Panc1 (cell line): ENCODE measurements at regions of chr19 and their contacts with region 1.

Region 1: DNA sequence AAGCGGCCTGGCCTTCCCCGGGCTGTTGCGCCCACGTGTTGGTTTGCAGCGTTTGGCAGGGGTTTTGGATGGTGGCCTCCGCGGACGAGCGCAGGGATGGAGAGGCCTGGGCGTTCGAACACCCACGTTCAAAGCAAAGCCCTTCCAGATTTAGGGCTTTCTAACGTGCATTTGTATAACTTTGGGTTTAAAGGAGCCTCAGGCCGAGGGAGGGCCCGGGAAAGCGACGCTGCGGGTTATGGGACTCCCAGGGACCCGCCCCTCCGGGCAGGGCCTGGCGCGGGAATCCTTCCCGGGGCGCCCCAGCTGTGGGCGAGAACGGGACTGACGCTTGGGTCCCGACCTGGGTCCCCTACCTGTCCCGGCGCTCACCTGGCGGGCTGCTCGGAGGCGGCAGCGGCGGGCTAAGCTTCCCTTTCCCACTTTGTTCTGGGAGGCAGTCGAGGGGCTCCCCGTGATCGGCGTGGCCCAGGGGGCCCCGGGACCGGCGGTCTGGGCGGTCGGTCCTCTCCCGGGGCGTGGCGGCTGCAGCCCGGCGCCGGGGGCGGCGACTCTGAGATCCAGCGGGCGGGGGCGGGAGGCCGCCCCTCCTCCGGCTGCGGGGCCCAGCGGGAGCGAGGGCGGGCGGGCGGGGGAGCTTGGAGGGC is at the start of gene FBXO17:
- DNase-seq: peak; percentile 81
- ATAC-seq: peak; percentile 89
- H3K4me3 ChIP-seq: peak within 1 kb of the TSS; percentile 50 to 59
- H3K27ac ChIP-seq: peak within 1 kb of the TSS; percentile 97
- H3K4me1 ChIP-seq: peaks cover 48% of the 10 kb centered on the region
- H3K27me3 ChIP-seq: no peaks in the 10 kb centered on the region
- CTCF ChIP-seq: no peak
- total RNA-seq, gene FBXO17: 411 TPM

Region 2: DNA sequence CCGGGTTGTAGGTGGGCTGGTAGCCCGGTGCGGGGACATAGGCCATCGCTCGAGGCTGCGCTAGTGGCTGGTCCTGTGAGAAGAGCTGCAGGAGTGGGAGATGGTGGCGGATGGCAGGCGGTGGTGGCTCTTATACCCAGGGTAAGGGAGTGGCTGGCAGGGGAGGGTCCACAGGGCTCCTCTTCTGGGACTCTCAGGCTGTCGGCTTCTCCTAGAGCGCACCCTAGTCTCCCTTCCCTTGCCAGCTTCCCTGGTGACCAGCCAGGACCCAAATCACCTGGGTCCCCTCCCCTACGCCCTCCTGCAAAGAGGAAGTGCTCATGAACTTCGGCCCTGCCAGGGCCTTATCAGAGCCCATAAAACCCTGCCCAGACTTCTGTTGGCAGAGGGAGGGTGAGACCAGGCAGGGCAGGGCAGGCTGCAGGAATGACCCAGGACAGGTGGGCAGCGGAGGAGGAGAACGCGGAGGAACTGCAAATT is 162.5 kb before region 1 on chr19 and contains the start of gene LGALS4:
- CTCF ChIA-PET with region 1: no interaction called
- POLR2A ChIA-PET with region 1: interaction called, 13 read pairs
- in situ Hi-C with region 1: no loop called
- intact Hi-C with region 1: no loop called
- DNase-seq: no peak
- ATAC-seq: peak; percentile 43
- H3K4me3 ChIP-seq: no peak within 1 kb of the TSS
- H3K27ac ChIP-seq: no peak within 1 kb of the TSS; the same call in 1 of the 2 replicates
- H3K4me1 ChIP-seq: peaks cover 4% of the 10 kb centered on the region; the same call in 1 of the 2 replicates
- H3K27me3 ChIP-seq: no peaks in the 10 kb centered on the region
- CTCF ChIP-seq: no peak
- total RNA-seq, gene LGALS4: 3.9 TPM

Region 3: GRCh38 chr19:38989066-38989605 is 13.8 kb after region 1 on chr19:
- CTCF ChIA-PET with region 1: interaction called, 36 read pairs
- POLR2A ChIA-PET with region 1: interaction called, 5 read pairs
- in situ Hi-C with region 1: no loop called
- intact Hi-C with region 1: no loop called
- DNase-seq: no peak
- ATAC-seq: peak; percentile 80
- H3K4me3 ChIP-seq: no peak overlapping the region
- H3K27ac ChIP-seq: peak overlapping the region; percentile 2
- H3K4me1 ChIP-seq: peaks cover 14% of the 10 kb centered on the region
- H3K27me3 ChIP-seq: no peaks in the 10 kb centered on the region
- CTCF ChIP-seq: no peak

Region 4: DNA sequence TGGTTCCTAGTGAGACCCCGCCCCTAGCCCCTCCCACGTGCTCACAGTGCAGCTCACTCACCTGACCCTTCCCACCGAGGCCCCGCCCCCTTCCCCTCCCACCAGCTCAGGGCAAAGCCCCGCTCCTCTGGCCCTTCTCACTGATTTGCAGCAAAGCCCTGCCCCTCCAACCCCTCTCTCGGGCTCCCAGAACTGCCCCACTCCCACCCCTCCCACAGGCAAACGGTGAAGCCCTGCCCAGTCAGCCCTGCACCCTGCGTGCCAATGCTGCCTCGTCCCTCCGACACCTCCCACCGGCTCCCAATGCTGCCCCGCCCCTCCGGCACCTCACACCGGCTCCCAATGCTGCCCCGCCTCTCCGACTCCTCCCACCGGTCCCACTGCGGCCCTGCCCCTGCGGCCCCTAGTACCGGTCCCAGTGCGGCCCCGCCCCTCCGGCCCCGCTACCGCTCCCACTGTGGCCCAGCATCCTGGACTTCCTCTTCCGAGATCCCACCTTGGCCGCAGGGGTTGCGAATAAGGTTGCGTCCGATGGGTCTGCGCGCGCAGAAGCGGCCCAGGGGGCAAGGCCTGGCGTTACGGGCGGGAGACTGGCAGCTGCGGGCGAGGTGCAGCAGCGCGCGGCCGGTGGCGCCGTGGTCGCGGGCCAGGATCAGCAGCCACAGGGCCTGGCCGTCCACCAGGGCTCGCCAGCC is 56.2 kb after region 1 on chr19:
- CTCF ChIA-PET with region 1: interaction called, 22 read pairs
- POLR2A ChIA-PET with region 1: interaction called, 4 read pairs
- in situ Hi-C with region 1: no loop called
- intact Hi-C with region 1: loop called (anchors 1 kb)
- DNase-seq: peak; percentile 100
- ATAC-seq: peak; percentile 93
- H3K4me3 ChIP-seq: peak overlapping the region; percentile 46 to 72
- H3K27ac ChIP-seq: peak overlapping the region; percentile 91
- H3K4me1 ChIP-seq: peaks cover 24% of the 10 kb centered on the region
- H3K27me3 ChIP-seq: no peaks in the 10 kb centered on the region
- CTCF ChIP-seq: no peak

Region 5: GRCh38 chr19:39038098-39038497 is 62.8 kb after region 1 on chr19:
- CTCF ChIA-PET with region 1: interaction called, 22 read pairs
- POLR2A ChIA-PET with region 1: interaction called, 3 read pairs
- in situ Hi-C with region 1: no loop called
- intact Hi-C with region 1: no loop called
- DNase-seq: no peak
- ATAC-seq: peak; percentile 96
- H3K4me3 ChIP-seq: peak overlapping the region in 1 of 2 experiments; percentile 5; a peak in 2 of 4 replicates
- H3K27ac ChIP-seq: peak overlapping the region; percentile 3; the same call in 1 of the 2 replicates
- H3K4me1 ChIP-seq: peaks cover 11% of the 10 kb centered on the region
- H3K27me3 ChIP-seq: no peaks in the 10 kb centered on the region
- CTCF ChIP-seq: no peak

Region 6: GRCh38 chr19:39046118-39046821 is 70.9 kb after region 1 on chr19:
- CTCF ChIA-PET with region 1: interaction called, 9 read pairs
- POLR2A ChIA-PET with region 1: interaction called, 12 read pairs
- in situ Hi-C with region 1: no loop called
- intact Hi-C with region 1: no loop called
- DNase-seq: no peak
- ATAC-seq: peak; percentile 80
- H3K4me3 ChIP-seq: no peak overlapping the region
- H3K27ac ChIP-seq: no peak overlapping the region
- H3K4me1 ChIP-seq: peaks cover 7% of the 10 kb centered on the region; the same call in 1 of the 2 replicates
- H3K27me3 ChIP-seq: no peaks in the 10 kb centered on the region
- CTCF ChIP-seq: no peak